Lower leg skin (tissue), 4 donors: ENCODE measurements at regions of chr2 and their contacts with region 1.

Region 1: GRCh38 chr2:80548469-80548868 is 243.9 kb upstream of the LRRTM1 start:
- DNase-seq: peak in 1 of 2 donors; percentile 18
- H3K4me3 ChIP-seq: no peak overlapping the region
- CTCF ChIP-seq: no peak
- POLR2A ChIP-seq: no peak

Region 2: GRCh38 chr2:80407377-80407776 is 141.1 kb before region 1 on chr2:
- intact Hi-C with region 1: loop called (anchors 5 kb)
- DNase-seq: no peak
- H3K4me3 ChIP-seq: no peak overlapping the region
- CTCF ChIP-seq: no peak
- POLR2A ChIP-seq: no peak

Region 3: GRCh38 chr2:81650048-81650971 is 1101.8 kb after region 1 on chr2:
- intact Hi-C with region 1: loop called (anchors 5 kb)
- DNase-seq: no peak
- H3K4me3 ChIP-seq: no peak overlapping the region
- CTCF ChIP-seq: no peak
- POLR2A ChIP-seq: no peak